MCF 10A (cell line): ENCODE measurements at regions of chr5 and their contacts with region 1.

Region 1: GRCh38 chr5:149636851-149637246 is 55.6 kb downstream of the ARHGEF37 start:
- DNase-seq: peak; percentile 90
- H3K4me3 Mint-ChIP-seq: no peak overlapping the region
- H3K27ac Mint-ChIP-seq: no peak overlapping the region
- H3K4me1 Mint-ChIP-seq: peaks cover 47% of the 10 kb centered on the region
- H3K27me3 Mint-ChIP-seq: no peaks in the 10 kb centered on the region
- CTCF ChIP-seq: peak; percentile 98

Region 2: GRCh38 chr5:149526845-149527580 is 109.8 kb before region 1 on chr5:
- CTCF ChIA-PET with region 1: no interaction called
- POLR2A ChIA-PET with region 1: no interaction called
- intact Hi-C with region 1: no loop called
- DNase-seq: no peak
- H3K4me3 Mint-ChIP-seq: no peak overlapping the region
- H3K27ac Mint-ChIP-seq: peak overlapping the region; percentile 46
- H3K4me1 Mint-ChIP-seq: peaks cover 62% of the 10 kb centered on the region
- H3K27me3 Mint-ChIP-seq: no peaks in the 10 kb centered on the region
- CTCF ChIP-seq: no peak

Region 3: GRCh38 chr5:149611326-149611725 is 25.5 kb before region 1 on chr5:
- CTCF ChIA-PET with region 1: interaction called, 34 read pairs
- POLR2A ChIA-PET with region 1: interaction called, 53 read pairs
- intact Hi-C with region 1: no loop called
- DNase-seq: no peak
- H3K4me3 Mint-ChIP-seq: no peak overlapping the region
- H3K27ac Mint-ChIP-seq: no peak overlapping the region
- H3K4me1 Mint-ChIP-seq: peaks cover 26% of the 10 kb centered on the region
- H3K27me3 Mint-ChIP-seq: no peaks in the 10 kb centered on the region
- CTCF ChIP-seq: no peak

Region 4: DNA sequence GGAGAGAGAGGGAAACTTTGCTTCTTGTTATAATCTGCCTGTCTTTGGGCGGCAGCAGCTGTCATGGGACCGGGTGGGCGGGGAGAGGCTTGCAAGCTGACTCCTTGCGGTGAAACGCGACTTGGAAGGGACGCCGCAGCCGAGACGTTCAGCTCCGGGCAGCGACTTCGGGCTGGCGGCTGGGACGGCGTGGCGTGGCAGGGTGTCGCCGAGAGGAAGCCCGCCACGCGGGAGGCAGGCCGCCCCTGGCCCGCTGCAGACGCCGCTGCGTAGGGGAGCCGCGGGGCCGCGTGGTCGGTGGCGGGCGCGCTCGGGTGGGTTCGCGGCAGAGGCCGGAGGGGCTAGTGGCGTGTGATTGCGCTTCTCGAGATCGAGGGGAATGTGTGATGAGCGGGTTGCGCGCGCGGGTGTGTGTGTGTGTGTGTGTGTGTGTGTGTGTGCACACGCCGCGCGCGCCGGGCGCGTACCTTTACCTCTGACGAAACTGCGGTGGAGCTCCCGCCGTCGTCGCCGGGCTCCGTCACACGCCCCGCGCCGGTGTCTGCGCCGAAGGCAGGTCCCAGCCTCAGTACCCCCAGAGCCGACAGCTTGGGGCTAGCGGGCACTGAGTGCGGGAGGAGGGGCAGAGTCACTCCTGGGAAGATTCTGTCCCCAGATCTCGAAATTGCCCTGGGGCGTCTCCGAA is 94.9 kb after region 1 on chr5:
- CTCF ChIA-PET with region 1: interaction called, 6 read pairs
- POLR2A ChIA-PET with region 1: interaction called, 20 read pairs
- intact Hi-C with region 1: loop called (anchors 2 kb)
- DNase-seq: peak; percentile 95
- H3K4me3 Mint-ChIP-seq: peak overlapping the region; percentile 94
- H3K27ac Mint-ChIP-seq: peak overlapping the region; percentile 66
- H3K4me1 Mint-ChIP-seq: peaks cover 27% of the 10 kb centered on the region
- H3K27me3 Mint-ChIP-seq: no peaks in the 10 kb centered on the region
- CTCF ChIP-seq: no peak

Region 5: GRCh38 chr5:149775785-149776184 is 138.9 kb after region 1 on chr5:
- CTCF ChIA-PET with region 1: interaction called, 24 read pairs
- POLR2A ChIA-PET with region 1: interaction called, 3 read pairs
- intact Hi-C with region 1: loop called (anchors 1 kb)
- DNase-seq: peak; percentile 63
- H3K4me3 Mint-ChIP-seq: no peak overlapping the region
- H3K27ac Mint-ChIP-seq: no peak overlapping the region
- H3K4me1 Mint-ChIP-seq: peaks cover 43% of the 10 kb centered on the region
- H3K27me3 Mint-ChIP-seq: no peaks in the 10 kb centered on the region
- CTCF ChIP-seq: peak; percentile 61

Region 6: DNA sequence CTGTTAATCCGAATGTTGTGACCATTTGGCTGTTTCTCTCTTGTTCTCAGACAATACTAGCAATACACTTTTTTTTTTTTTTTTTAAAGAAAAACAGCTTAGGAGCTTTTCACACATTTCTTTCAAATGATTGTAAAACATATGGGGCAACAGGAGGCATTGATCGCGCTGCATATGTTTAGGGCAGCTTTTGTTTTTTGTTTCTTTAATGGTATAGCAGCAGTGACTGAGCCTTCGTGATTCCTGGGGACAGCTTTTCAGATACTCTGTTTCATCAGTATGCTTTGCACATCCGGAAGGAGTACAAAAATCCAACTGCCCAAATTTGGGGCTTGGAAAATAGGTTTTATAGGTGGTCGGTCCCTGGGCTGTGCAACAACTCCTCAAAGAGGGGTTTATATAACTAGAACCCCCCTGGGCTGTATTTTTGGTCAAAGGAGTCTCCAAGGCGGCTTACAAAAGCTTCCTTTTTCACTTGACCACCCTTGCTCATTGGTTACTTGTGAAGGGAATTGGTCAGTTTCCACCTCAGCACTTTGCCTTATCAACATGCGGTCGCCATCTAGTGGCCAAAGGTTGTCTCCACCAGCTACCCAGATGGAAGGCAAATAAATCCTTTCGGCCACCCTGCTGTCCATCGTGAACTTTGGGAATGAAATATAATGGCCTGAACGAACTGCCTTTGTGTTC is 215.9 kb after region 1 on chr5:
- CTCF ChIA-PET with region 1: interaction called, 12 read pairs
- POLR2A ChIA-PET with region 1: interaction called, 4 read pairs
- intact Hi-C with region 1: no loop called
- DNase-seq: peak; percentile 91
- H3K4me3 Mint-ChIP-seq: no peak overlapping the region
- H3K27ac Mint-ChIP-seq: peak overlapping the region; percentile 16
- H3K4me1 Mint-ChIP-seq: peaks cover 17% of the 10 kb centered on the region
- H3K27me3 Mint-ChIP-seq: no peaks in the 10 kb centered on the region
- CTCF ChIP-seq: peak; percentile 87

Region 7: DNA sequence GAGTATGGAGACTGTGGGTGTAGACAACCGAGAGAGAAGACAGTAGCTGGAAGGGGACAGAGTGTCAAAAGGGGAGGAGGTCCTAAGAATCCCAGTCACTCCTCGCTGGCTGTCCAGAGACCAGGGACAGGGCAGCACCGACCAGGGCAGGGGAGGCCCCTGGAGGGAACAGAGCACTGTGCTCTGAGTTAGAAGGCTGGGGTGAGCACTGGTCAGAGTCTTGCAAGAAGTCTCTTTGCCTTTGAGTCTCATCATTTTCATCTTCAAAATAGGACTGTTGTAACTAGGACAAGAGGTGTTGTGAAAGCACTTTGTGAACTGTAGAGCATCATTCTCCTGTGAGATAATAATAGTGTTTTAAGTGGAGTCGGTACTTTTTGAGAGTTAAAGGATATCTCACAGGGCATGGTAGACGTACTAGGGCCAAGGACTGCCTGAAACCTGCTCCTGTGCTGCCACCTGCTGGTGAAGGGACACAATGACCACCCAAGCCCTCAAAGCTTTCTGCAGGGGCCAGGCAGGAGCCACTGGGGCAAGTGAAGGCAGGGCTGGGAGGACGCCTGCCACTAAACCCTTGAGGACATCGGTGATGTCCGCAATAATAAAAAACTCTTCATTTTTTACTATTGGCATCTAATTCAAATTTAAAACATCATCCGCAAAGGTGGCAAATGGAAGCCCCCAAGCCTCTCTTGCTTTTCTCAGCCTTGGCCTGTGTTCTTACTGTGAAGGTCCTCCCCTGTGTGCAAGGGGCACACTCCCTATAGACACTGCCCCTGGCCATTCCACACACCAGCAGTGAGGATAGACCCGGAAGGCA is 581.2 kb after region 1 on chr5:
- CTCF ChIA-PET with region 1: no interaction called
- POLR2A ChIA-PET with region 1: no interaction called
- intact Hi-C with region 1: loop called (anchors 2 kb)
- DNase-seq: peak; percentile 93
- H3K4me3 Mint-ChIP-seq: no peak overlapping the region
- H3K27ac Mint-ChIP-seq: no peak overlapping the region
- H3K4me1 Mint-ChIP-seq: no peaks in the 10 kb centered on the region
- H3K27me3 Mint-ChIP-seq: no peaks in the 10 kb centered on the region
- CTCF ChIP-seq: peak; percentile 98